Endothelial cell of umbilical vein (primary cell): ENCODE measurements at regions of chr2 and their contacts with region 1.

Region 1: GRCh38 chr2:65432227-65433190 is at the start of gene SPRED2:
- DNase-seq: peak; percentile 90
- H3K4me3 ChIP-seq: peak within 1 kb of the TSS; percentile 72 to 82 (median 73)
- H3K27ac ChIP-seq: peak within 1 kb of the TSS; percentile 7
- H3K4me1 ChIP-seq: peaks cover 17% of the 10 kb centered on the region
- H3K27me3 ChIP-seq: peaks cover 20 to 41% of the 10 kb centered on the region in 2 experiments
- CTCF ChIP-seq: no peak
- POLR2A ChIP-seq: peak; percentile 53
- total RNA-seq, gene SPRED2: 7.8 and 9.6 TPM in 2 replicates

Region 2: GRCh38 chr2:65129826-65130663 is 302.5 kb before region 1 on chr2 and contains the start of gene RAB1A:
- CTCF ChIA-PET with region 1: no interaction called
- POLR2A ChIA-PET with region 1: no interaction called
- dilution Hi-C with region 1: no loop called
- intact Hi-C with region 1: loop called (anchors 5 kb)
- DNase-seq: peak; percentile 100
- H3K4me3 ChIP-seq: peak within 1 kb of the TSS; percentile 98 to 100 (median 100)
- H3K27ac ChIP-seq: peak within 1 kb of the TSS; percentile 87
- H3K4me1 ChIP-seq: peaks cover 33% of the 10 kb centered on the region
- H3K27me3 ChIP-seq: no peaks in the 10 kb centered on the region
- CTCF ChIP-seq: peak; percentile 8 to 55
- POLR2A ChIP-seq: peak; percentile 69
- total RNA-seq, gene RAB1A: 170 and 176 TPM in 2 replicates

Region 3: GRCh38 chr2:65240657-65241056 is 191.9 kb before region 1 on chr2:
- CTCF ChIA-PET with region 1: no interaction called
- POLR2A ChIA-PET with region 1: no interaction called
- dilution Hi-C with region 1: no loop called
- intact Hi-C with region 1: no loop called
- DNase-seq: no peak
- H3K4me3 ChIP-seq: no peak overlapping the region
- H3K27ac ChIP-seq: no peak overlapping the region
- H3K4me1 ChIP-seq: no peaks in the 10 kb centered on the region
- H3K27me3 ChIP-seq: no peaks in the 10 kb centered on the region
- CTCF ChIP-seq: no peak
- POLR2A ChIP-seq: no peak

Region 4: GRCh38 chr2:65366595-65367125 is 65.8 kb before region 1 on chr2:
- CTCF ChIA-PET with region 1: no interaction called
- POLR2A ChIA-PET with region 1: no interaction called
- dilution Hi-C with region 1: no loop called
- intact Hi-C with region 1: loop called (anchors 1 kb)
- DNase-seq: peak; percentile 97
- H3K4me3 ChIP-seq: no peak overlapping the region
- H3K27ac ChIP-seq: peak overlapping the region; percentile 27
- H3K4me1 ChIP-seq: peaks cover 20% of the 10 kb centered on the region
- H3K27me3 ChIP-seq: no peaks in the 10 kb centered on the region
- CTCF ChIP-seq: no peak
- POLR2A ChIP-seq: no peak

Region 5: GRCh38 chr2:65420712-65421431 is 11.6 kb before region 1 on chr2:
- CTCF ChIA-PET with region 1: no interaction called
- POLR2A ChIA-PET with region 1: no interaction called
- dilution Hi-C with region 1: no loop called
- intact Hi-C with region 1: loop called (anchors 1 kb)
- DNase-seq: peak; percentile 82
- H3K4me3 ChIP-seq: no peak overlapping the region
- H3K27ac ChIP-seq: no peak overlapping the region
- H3K4me1 ChIP-seq: peaks cover 14% of the 10 kb centered on the region
- H3K27me3 ChIP-seq: peaks cover 54 to 63% of the 10 kb centered on the region in 2 experiments
- CTCF ChIP-seq: no peak
- POLR2A ChIP-seq: no peak

Region 6: DNA sequence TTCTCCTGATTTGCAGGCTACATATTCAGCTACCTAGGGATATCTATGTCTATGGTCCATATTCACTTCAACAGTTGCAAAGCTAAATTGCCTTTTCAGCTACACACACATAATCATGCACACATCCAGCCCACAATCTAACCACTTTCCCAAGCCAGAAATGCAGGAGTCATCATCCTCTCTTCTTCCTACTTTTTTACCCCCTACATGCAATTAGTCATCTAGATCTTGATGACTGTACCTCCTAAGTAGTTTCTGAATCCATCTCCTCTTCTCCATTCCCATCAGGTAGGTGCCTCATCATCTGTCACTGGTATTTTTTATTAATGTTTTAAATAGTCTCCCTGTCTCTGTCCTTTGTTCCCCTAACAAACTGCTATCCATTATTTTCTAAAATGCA is 23.6 kb after region 1 on chr2:
- CTCF ChIA-PET with region 1: no interaction called
- POLR2A ChIA-PET with region 1: no interaction called
- dilution Hi-C with region 1: no loop called
- intact Hi-C with region 1: no loop called
- DNase-seq: no peak
- H3K4me3 ChIP-seq: no peak overlapping the region
- H3K27ac ChIP-seq: no peak overlapping the region
- H3K4me1 ChIP-seq: no peaks in the 10 kb centered on the region
- H3K27me3 ChIP-seq: peaks cover 22 to 40% of the 10 kb centered on the region in 2 experiments
- CTCF ChIP-seq: no peak
- POLR2A ChIP-seq: no peak